H1 (cell line): ENCODE measurements at regions of chr12 and their contacts with region 1.

Region 1: GRCh38 chr12:54201001-54201794 is 12.4 kb upstream of the SMUG1 start:
- DNase-seq: peak in 1 of 2 experiments; percentile 90
- H3K4me3 ChIP-seq: no peak overlapping the region
- H3K27ac ChIP-seq: no peak overlapping the region
- H3K4me1 ChIP-seq: peaks cover 0 to 5% (median 0%) of the 10 kb centered on the region in 4 experiments; a peak in 3 of 7 replicates
- H3K27me3 ChIP-seq: peaks cover 6 to 61% (median 39%) of the 10 kb centered on the region in 4 experiments
- CTCF ChIP-seq: peak; percentile 97 to 100 (median 99)
- EP300 ChIP-seq: no peak
- POLR2A ChIP-seq: no peak
- RAD21 ChIP-seq: peak; percentile 83 to 89

Region 2: DNA sequence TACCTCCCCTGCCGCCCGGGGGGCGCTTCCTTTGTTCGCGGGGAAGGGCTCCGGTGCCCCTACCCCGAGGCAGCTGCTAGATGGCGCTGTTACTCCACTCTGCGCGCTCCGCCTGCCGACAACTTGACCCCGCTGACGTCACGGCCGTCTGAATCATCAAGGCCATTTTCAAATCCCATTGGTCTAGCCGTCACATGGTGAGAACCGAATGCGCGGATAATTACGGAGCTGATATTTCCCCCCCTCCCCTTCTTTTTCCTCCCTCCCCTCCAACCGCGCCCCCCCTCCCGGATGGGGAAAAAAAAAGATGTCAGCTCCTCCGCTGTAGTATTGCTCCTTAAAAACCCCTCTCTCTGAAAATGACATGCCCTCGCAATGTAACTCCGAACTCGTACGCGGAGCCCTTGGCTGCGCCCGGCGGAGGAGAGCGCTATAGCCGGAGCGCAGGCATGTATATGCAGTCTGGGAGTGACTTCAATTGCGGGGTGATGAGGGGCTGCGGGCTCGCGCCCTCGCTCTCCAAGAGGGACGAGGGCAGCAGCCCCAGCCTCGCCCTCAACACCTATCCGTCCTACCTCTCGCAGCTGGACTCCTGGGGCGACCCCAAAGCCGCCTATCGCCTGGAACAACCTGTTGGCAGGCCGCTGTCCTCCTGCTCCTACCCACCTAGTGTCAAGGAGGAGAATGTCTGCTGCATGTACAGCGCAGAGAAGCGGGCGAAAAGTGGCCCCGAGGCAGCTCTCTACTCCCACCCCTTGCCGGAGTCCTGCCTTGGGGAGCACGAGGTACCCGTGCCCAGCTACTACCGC is 216.1 kb before region 1 on chr12 and contains the start of gene HOXC10:
- CTCF ChIA-PET with region 1: interaction called, 62 read pairs
- POLR2A ChIA-PET with region 1: no interaction called
- DNase-seq: peak in 1 of 2 experiments; percentile 93
- H3K4me3 ChIP-seq: peak within 1 kb of the TSS in 1 of 4 experiments; percentile 38; a peak in 2 of 8 replicates
- H3K27ac ChIP-seq: no peak within 1 kb of the TSS
- H3K4me1 ChIP-seq: peaks cover 0 to 6% (median 3%) of the 10 kb centered on the region in 4 experiments; a peak in 3 of 7 replicates
- H3K27me3 ChIP-seq: peaks cover 92 to 99% (median 97%) of the 10 kb centered on the region in 4 experiments
- CTCF ChIP-seq: peak; percentile 84 to 97 (median 89)
- EP300 ChIP-seq: 0 out of 3 replicates have a peak, but pooled peaks of 1 of the 2 experiments have one; percentile 18
- POLR2A ChIP-seq: no peak
- RAD21 ChIP-seq: peak; percentile 87 to 89
- total RNA-seq, gene HOXC10: not detected in 2 replicates

Region 3: DNA sequence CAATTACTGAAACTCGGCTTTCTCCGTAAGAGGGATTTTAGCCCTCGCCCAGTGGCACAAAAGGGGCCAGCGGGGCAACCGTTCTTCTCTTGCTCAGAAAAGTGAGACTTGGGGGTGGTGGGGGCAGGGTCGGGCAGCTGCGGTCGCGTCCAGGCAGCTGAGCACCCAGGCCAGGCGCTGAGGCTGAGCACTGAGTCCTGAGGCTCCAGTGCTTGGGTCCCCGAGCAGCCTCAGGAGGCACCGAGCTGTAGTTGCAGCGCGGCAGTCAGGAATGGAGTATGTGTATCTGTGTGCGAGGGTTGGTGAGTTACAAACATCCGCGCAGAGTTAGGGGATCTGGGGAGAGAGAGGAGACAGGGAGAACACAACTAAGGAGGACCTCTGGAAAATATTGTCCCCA is 177.1 kb before region 1 on chr12:
- CTCF ChIA-PET with region 1: interaction called, 339 read pairs
- POLR2A ChIA-PET with region 1: no interaction called
- DNase-seq: no peak
- H3K4me3 ChIP-seq: no peak overlapping the region
- H3K27ac ChIP-seq: no peak overlapping the region
- H3K4me1 ChIP-seq: peaks cover 0 to 6% (median under 1%) of the 10 kb centered on the region in 4 experiments; a peak in 3 of 7 replicates
- H3K27me3 ChIP-seq: peaks cover 97 to 100% (median 100%) of the 10 kb centered on the region in 4 experiments
- CTCF ChIP-seq: no peak
- EP300 ChIP-seq: no peak
- POLR2A ChIP-seq: no peak
- RAD21 ChIP-seq: no peak

Region 4: DNA sequence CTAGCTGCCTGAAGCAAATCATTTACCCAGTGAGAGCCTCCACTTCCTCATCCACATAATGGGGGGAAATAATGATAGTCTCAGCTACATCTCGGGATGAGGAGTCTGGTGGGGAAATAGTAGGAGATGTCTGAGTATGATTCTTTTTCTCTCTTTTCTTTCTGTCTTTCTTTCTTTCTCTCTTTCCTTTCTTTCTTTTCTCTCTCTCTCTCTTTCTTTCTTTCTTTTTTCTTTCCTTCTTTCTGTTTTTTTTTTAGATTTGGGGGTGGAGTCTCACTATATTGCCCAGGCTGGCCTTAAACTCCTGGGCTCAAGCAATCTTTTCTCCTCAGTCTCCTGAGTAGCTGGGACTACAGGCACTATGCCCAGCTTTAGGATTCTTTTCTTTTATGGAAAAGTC is 134.8 kb before region 1 on chr12:
- CTCF ChIA-PET with region 1: interaction called, 16 read pairs
- POLR2A ChIA-PET with region 1: no interaction called
- DNase-seq: no peak
- H3K4me3 ChIP-seq: no peak overlapping the region
- H3K27ac ChIP-seq: no peak overlapping the region
- H3K4me1 ChIP-seq: 0 out of 7 replicates have a peak, but pooled peaks cover 0 to 2% (median 0%) of the 10 kb centered on the region in 4 experiments
- H3K27me3 ChIP-seq: peaks cover 27 to 75% (median 55%) of the 10 kb centered on the region in 4 experiments
- CTCF ChIP-seq: no peak
- EP300 ChIP-seq: no peak
- POLR2A ChIP-seq: no peak
- RAD21 ChIP-seq: no peak

Region 5: GRCh38 chr12:54164387-54165145 is 36.6 kb before region 1 on chr12:
- CTCF ChIA-PET with region 1: interaction called, 32 read pairs
- POLR2A ChIA-PET with region 1: no interaction called
- DNase-seq: peak in 1 of 2 experiments; percentile 61
- H3K4me3 ChIP-seq: peak overlapping the region in 1 of 4 experiments; percentile 35; a peak in 3 of 8 replicates
- H3K27ac ChIP-seq: no peak overlapping the region
- H3K4me1 ChIP-seq: peaks cover 0 to 17% (median 12%) of the 10 kb centered on the region in 4 experiments; a peak in 6 of 7 replicates
- H3K27me3 ChIP-seq: peaks cover 0 to 9% (median 5%) of the 10 kb centered on the region in 4 experiments; a peak in 5 of 7 replicates
- CTCF ChIP-seq: no peak
- EP300 ChIP-seq: no peak
- POLR2A ChIP-seq: no peak
- RAD21 ChIP-seq: no peak

Region 6: DNA sequence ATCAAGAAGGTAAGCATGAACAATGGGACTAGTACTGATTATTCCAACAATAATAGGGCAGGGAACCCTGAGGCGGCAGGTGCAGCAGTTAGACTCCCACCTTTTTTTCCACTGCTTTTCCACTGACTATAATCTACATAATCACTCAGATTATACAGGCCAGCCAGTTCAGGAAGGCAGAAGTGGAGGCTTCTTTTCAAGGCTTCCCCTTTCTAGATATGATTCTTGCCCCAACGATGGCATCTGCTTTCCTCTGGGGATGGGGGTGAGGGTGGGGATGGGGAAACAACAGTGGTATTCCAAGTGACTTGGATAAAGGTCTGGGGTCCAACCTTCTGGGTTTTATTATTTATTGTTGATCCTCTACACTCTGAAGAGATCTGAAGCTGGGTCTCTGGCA is 296.7 kb after region 1 on chr12:
- CTCF ChIA-PET with region 1: no interaction called
- POLR2A ChIA-PET with region 1: no interaction called
- DNase-seq: no peak
- H3K4me3 ChIP-seq: no peak overlapping the region
- H3K27ac ChIP-seq: no peak overlapping the region
- H3K4me1 ChIP-seq: no peaks in the 10 kb centered on the region
- H3K27me3 ChIP-seq: no peaks in the 10 kb centered on the region
- CTCF ChIP-seq: no peak
- EP300 ChIP-seq: no peak
- POLR2A ChIP-seq: no peak
- RAD21 ChIP-seq: no peak